ENCODE measurements at regions of chr1 and their contacts with region 1.

Region 1: GRCh38 chr1:35564037-35564883 is 6.7 kb downstream of the NCDN start:
- DNase-seq: no peak
- H3K4me3 ChIP-seq: no peak overlapping the region
- H3K27me3 ChIP-seq: no peaks in the 10 kb centered on the region
- CTCF ChIP-seq: peak; percentile 86

Region 2: DNA sequence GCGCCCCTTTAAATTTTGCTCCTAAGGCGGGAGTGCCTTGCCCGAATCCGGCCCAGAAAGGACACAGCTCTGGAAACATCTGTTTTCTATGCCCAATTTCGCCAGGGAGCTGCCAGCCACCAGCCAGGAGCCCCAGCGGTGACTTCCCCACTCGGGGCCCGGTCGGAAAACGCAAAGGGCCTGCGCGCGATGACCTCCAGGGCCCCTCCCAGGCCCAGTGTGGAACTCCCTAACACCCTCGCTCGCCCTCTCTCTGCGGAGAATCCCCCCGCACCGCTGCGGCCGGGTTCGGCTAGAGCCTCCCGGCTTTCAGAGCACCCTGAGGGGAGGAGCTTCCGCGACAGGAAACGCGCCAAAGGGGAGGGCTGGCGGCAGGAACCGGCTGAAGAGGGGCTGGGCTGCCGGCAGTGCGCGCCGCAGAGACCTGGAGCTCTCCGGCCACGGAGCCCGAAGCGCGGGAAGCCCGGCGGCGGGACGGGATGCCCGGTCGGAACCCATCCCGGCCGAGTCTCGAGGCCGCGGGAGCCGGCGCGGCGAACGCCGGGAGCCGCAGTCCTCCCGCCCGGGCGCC is 205.0 kb after region 1 on chr1:
- CTCF ChIA-PET with region 1: interaction called, 11 read pairs
- POLR2A ChIA-PET with region 1: no interaction called
- DNase-seq: peak; percentile 40
- H3K4me3 ChIP-seq: peak overlapping the region; percentile 58
- H3K27me3 ChIP-seq: no peaks in the 10 kb centered on the region
- CTCF ChIP-seq: peak; percentile 40; the same call in 1 of the 2 replicates

Region 3: DNA sequence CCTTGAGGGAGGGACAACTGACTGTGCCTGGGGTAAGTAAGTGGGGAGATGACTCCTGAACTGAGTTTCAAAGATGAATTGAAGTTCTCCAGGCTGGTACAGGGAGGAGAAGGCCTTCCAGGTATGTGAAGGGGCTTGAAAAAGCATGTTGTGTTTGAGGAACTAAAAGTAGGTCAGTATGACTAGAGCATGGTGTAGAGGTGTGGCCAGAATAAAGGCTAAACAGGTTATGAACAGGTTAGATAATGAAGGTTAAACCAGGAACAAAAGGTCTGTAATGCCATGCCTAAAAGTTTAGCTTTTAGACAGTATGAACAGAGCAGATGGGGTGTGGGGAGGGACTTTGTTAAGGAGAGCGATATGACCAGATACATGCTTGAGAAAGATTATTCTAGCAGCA is 212.8 kb after region 1 on chr1:
- CTCF ChIA-PET with region 1: interaction called, 20 read pairs
- POLR2A ChIA-PET with region 1: no interaction called
- DNase-seq: no peak
- H3K4me3 ChIP-seq: no peak overlapping the region
- H3K27me3 ChIP-seq: no peaks in the 10 kb centered on the region
- CTCF ChIP-seq: no peak